Stomach (tissue), 19 donors: ENCODE measurements at regions of chr9 and their contacts with region 1.

Region 1: DNA sequence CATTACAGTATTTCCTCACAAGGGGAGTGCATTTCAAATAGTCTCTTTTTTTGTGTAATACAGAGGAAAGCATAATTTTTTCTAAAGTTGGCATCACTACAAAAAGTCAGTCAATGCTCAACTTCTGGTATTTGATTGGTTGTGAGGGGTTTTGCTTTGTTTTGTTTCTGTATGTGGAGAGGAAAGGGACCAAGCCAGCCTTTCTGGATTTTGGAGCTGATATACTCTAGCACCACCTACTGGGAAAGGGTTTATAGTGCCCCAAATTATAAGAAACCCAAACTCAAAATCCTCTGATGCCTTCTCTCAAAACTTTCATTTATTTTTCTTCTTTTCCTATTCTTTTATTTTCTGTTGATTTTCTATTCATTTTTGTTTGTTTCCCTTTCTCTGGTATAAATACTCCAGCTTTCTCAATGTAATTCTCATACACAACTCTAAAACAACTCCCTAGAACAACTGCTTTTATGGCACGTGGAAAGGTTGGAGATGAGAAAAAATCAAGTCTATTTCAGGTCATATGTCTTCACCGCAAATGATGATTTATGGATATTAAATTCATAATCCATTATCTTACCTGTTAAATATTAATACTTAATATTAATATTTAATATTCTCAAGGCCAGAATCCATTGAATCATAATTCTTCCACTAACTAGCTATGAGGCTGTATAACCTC is 69.5 kb upstream of the ANXA1 start:
- DNase-seq: peak in 1 of 2 donors; percentile 85
- H3K4me3 ChIP-seq: no peak overlapping the region
- H3K27ac ChIP-seq: no peak overlapping the region
- H3K4me1 ChIP-seq: peaks cover 0 to 22% (median 4%) of the 10 kb centered on the region in 4 donors
- H3K27me3 ChIP-seq: no peaks in the 10 kb centered on the region
- CTCF ChIP-seq: peak in 5 of 7 experiments; percentile 49 to 74 (median 72)
- EP300 ChIP-seq: no peak
- POLR2A ChIP-seq: no peak

Region 2: DNA sequence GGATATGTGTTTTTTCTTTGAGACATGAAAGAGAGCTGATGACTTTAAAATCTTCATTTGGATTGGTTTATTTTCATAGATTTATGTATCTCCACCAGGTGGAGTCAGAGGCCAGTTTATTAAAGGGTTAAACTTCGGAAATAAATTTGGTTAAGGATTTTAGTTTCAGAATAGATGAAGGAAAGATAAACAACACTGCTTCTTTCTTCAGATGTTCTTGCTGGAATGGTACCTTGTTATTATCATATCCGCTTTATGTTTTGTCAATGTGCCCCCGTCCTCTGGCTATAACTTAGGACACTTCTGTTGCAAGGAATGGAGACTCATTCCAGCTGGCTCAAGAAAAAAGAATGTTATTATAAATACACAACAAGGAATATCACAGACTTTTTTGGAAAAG is 210.4 kb before region 1 on chr9:
- intact Hi-C with region 1: loop called (anchors 10 kb)
- DNase-seq: peak in 1 of 2 donors; percentile 39
- H3K4me3 ChIP-seq: no peak overlapping the region
- H3K27ac ChIP-seq: no peak overlapping the region
- H3K4me1 ChIP-seq: peaks cover 0 to 29% (median 20%) of the 10 kb centered on the region in 4 donors
- H3K27me3 ChIP-seq: no peaks in the 10 kb centered on the region
- CTCF ChIP-seq: peak in 3 of 7 experiments; percentile 44 to 48 (median 47)
- EP300 ChIP-seq: no peak
- POLR2A ChIP-seq: no peak

Region 3: GRCh38 chr9:72937545-72937944 is 144.6 kb before region 1 on chr9:
- intact Hi-C with region 1: no loop called
- DNase-seq: no peak
- H3K4me3 ChIP-seq: no peak overlapping the region
- H3K27ac ChIP-seq: no peak overlapping the region
- H3K4me1 ChIP-seq: peaks cover 0 to 64% (median 22%) of the 10 kb centered on the region in 4 donors
- H3K27me3 ChIP-seq: no peaks in the 10 kb centered on the region
- CTCF ChIP-seq: no peak
- EP300 ChIP-seq: no peak
- POLR2A ChIP-seq: no peak